CD14-positive monocyte (primary cell): ENCODE measurements at regions of chr16 and their contacts with region 1.

Region 1: GRCh38 chr16:84194470-84195200 is 3.7 kb downstream of the ADAD2 start:
- DNase-seq: peak in 2 of 3 donors; percentile 39 to 59
- H3K4me3 ChIP-seq: no peak overlapping the region
- H3K4me3 Mint-ChIP-seq: peak overlapping the region; percentile 37 to 63
- H3K27ac ChIP-seq: no peak overlapping the region
- H3K27ac Mint-ChIP-seq: peak overlapping the region in 2 of 7 donors; percentile 19 to 57
- H3K4me1 ChIP-seq: peaks cover 12 to 20% of the 10 kb centered on the region in 2 donors
- H3K4me1 Mint-ChIP-seq: peaks cover 23% of the 10 kb centered on the region
- H3K27me3 ChIP-seq: no peaks in the 10 kb centered on the region
- H3K27me3 Mint-ChIP-seq: peaks cover 0 to 14% (median 6%) of the 10 kb centered on the region in 3 donors
- CTCF ChIP-seq: no peak

Region 2: DNA sequence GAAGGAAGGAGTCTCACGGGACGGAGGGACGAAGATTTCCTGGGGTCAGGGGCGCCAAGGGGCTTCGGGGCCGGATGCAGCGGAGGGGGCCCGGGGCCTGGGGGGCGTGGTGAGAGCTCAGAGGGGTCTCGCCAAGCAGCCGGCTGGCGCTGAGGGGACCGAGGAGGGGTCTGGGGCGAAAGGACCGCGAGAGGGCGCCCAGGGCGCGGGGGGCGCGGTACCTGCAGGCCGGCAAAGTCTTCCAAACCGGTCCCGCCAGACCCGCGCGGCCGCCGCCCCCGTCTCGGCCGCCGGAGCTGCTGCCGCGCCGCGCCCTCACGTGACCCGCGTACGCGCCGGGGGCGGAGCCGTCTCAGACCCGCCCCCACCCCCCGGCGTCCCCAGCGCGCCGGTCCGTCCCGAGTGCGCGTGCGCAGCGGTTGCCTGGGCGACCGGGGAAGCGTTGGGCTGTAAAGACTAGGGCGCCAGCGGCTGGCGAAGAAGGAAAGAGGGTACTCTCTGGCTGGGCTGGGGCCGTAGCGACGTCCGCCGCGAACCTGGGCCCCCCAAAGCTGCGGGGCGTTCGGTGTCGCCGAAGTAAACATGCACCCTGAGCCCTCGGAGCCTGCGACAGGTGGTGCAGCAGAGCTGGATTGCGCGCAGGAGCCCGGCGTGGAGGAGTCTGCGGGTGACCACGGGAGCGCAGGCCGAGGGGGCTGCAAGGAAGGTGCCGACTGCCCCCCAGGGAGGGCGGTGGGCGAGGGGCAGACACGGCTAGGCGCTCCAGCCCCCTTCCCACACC is 49.6 kb before region 1 on chr16 and contains the starts of genes DNAAF1 and HSDL1:
- intact Hi-C with region 1: loop called in 1 of 2 experiments (anchors 10 kb)
- DNase-seq: peak; percentile 83 to 90 (median 83)
- H3K4me3 ChIP-seq: peak within 1 kb of the TSS; percentile 73 to 91 (median 86)
- H3K4me3 Mint-ChIP-seq: peak within 1 kb of the TSS; percentile 90 to 98
- H3K27ac ChIP-seq: peak within 1 kb of the TSS; percentile 25 to 84
- H3K27ac Mint-ChIP-seq: peak within 1 kb of the TSS; percentile 73 to 91 (median 85)
- H3K4me1 ChIP-seq: peaks cover 13 to 16% of the 10 kb centered on the region in 2 donors
- H3K4me1 Mint-ChIP-seq: peaks cover 5% of the 10 kb centered on the region
- H3K27me3 ChIP-seq: peaks cover 0 to 20% of the 10 kb centered on the region in 2 donors
- H3K27me3 Mint-ChIP-seq: peaks cover 9 to 36% (median 22%) of the 10 kb centered on the region in 3 donors
- CTCF ChIP-seq: no peak
- polyA plus RNA-seq, gene DNAAF1: 0.23 to 14.6 TPM in 2 of 3 donors, not detected in the other
- polyA plus RNA-seq, gene HSDL1: 7.3 to 13.3 (median 8.0) TPM

Region 3: DNA sequence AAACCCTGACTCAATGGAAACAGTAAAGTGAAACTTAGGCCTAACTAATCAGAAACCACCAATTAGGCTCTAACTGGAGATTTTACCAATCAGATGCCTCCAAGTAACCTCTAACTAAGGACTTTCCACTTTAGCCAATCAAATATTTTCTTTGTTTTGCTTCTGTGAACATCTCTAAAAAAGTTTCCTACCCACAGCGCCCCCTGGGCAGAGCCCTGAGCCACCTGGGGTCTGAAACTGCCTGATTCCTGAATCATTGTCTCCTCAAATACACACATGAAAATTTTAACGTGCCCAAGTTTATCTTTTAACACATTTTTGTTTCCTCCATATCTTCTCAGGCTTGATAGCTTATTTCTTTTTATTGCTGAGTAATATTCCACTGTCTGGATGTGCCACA is 15.4 kb after region 1 on chr16:
- intact Hi-C with region 1: no loop called
- DNase-seq: no peak
- H3K4me3 ChIP-seq: no peak overlapping the region
- H3K4me3 Mint-ChIP-seq: no peak overlapping the region
- H3K27ac ChIP-seq: no peak overlapping the region
- H3K27ac Mint-ChIP-seq: no peak overlapping the region
- H3K4me1 ChIP-seq: no peaks in the 10 kb centered on the region
- H3K4me1 Mint-ChIP-seq: peaks cover 6% of the 10 kb centered on the region
- H3K27me3 ChIP-seq: no peaks in the 10 kb centered on the region
- H3K27me3 Mint-ChIP-seq: peaks cover 3 to 13% (median 3%) of the 10 kb centered on the region in 3 donors
- CTCF ChIP-seq: no peak